Activated CD8-positive, alpha-beta memory T cell treated with anti-CD3 and anti-CD28 coated beads, Interleukin-2, amount 10 ng/mL, durations not matched to agents 7 days and 5 days (primary cell): ENCODE measurements at regions of chr12 and their contacts with region 1.

Region 1: DNA sequence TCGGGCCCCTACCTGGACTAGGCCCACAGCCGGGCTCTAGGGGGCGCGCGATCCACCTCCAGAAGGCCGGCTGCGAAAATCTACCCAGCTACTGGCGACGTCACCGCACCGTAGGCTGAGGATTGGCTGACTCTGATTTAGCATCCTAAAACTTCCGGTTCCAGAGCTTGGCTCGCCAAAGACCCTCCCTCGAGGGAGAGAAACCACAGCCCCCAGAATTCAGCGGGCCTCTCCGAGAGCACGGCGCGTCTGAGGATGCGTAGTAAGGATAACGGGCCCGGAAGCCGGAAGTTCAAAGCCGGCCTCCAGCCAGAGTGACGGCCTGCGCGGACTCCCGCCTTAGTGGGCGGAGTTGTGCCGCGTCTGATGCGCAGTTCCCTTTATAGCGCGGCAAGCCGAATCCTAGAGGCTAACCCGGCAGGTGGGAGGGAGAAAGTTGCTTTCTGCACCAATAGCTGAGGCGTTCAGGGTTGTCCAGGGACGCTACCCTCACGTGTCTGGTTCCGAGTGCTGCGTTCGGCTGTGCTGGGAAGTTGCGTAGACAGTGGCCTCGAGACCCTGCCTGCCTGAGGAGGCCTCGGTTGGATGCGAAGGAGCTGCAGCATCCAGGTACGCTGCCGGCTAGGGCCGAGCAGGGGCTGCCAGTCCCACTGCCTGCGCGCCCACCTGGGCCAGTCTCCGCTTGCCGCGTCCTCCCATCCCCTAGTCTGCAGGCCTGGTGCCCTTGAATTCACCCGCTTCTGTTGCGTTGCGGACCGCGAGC is at the start of gene COX14:
- DNase-seq: peak; percentile 100
- ATAC-seq: peak; percentile 90
- H3K4me3 Mint-ChIP-seq: peak within 1 kb of the TSS; percentile 100
- H3K27ac Mint-ChIP-seq: peak within 1 kb of the TSS; percentile 99
- H3K4me1 Mint-ChIP-seq: peaks cover 36% of the 10 kb centered on the region
- H3K27me3 Mint-ChIP-seq: no peaks in the 10 kb centered on the region
- total RNA-seq, gene COX14: 55.1 to 64.5 TPM

Region 2: GRCh38 chr12:49967042-49967776 is 144.7 kb before region 1 on chr12:
- CTCF ChIA-PET with region 1: interaction called, 21 read pairs
- DNase-seq: peak; percentile 93
- ATAC-seq: peak; percentile 90
- H3K4me3 Mint-ChIP-seq: peak overlapping the region; percentile 47
- H3K27ac Mint-ChIP-seq: no peak overlapping the region
- H3K4me1 Mint-ChIP-seq: peaks cover 7% of the 10 kb centered on the region
- H3K27me3 Mint-ChIP-seq: peaks cover 41% of the 10 kb centered on the region

Region 3: GRCh38 chr12:50074936-50075807 is 36.7 kb before region 1 on chr12:
- CTCF ChIA-PET with region 1: interaction called, 22 read pairs
- DNase-seq: peak; percentile 86
- ATAC-seq: peak; percentile 95
- H3K4me3 Mint-ChIP-seq: no peak overlapping the region
- H3K27ac Mint-ChIP-seq: peak overlapping the region; percentile 42
- H3K4me1 Mint-ChIP-seq: peaks cover 10% of the 10 kb centered on the region
- H3K27me3 Mint-ChIP-seq: no peaks in the 10 kb centered on the region

Region 4: GRCh38 chr12:50127546-50127945 is 15.7 kb after region 1 on chr12:
- CTCF ChIA-PET with region 1: interaction called, 26 read pairs
- DNase-seq: no peak
- ATAC-seq: no peak
- H3K4me3 Mint-ChIP-seq: no peak overlapping the region
- H3K27ac Mint-ChIP-seq: no peak overlapping the region
- H3K4me1 Mint-ChIP-seq: peaks cover 25% of the 10 kb centered on the region
- H3K27me3 Mint-ChIP-seq: no peaks in the 10 kb centered on the region

Region 5: GRCh38 chr12:50167041-50167828 is 55.4 kb after region 1 on chr12 and contains the start of gene CERS5:
- CTCF ChIA-PET with region 1: interaction called, 52 read pairs
- DNase-seq: peak; percentile 99
- ATAC-seq: peak; percentile 99
- H3K4me3 Mint-ChIP-seq: peak within 1 kb of the TSS; percentile 87
- H3K27ac Mint-ChIP-seq: peak within 1 kb of the TSS; percentile 97
- H3K4me1 Mint-ChIP-seq: peaks cover 27% of the 10 kb centered on the region
- H3K27me3 Mint-ChIP-seq: no peaks in the 10 kb centered on the region
- total RNA-seq, gene CERS5: 55.0 to 56.3 TPM

Region 6: DNA sequence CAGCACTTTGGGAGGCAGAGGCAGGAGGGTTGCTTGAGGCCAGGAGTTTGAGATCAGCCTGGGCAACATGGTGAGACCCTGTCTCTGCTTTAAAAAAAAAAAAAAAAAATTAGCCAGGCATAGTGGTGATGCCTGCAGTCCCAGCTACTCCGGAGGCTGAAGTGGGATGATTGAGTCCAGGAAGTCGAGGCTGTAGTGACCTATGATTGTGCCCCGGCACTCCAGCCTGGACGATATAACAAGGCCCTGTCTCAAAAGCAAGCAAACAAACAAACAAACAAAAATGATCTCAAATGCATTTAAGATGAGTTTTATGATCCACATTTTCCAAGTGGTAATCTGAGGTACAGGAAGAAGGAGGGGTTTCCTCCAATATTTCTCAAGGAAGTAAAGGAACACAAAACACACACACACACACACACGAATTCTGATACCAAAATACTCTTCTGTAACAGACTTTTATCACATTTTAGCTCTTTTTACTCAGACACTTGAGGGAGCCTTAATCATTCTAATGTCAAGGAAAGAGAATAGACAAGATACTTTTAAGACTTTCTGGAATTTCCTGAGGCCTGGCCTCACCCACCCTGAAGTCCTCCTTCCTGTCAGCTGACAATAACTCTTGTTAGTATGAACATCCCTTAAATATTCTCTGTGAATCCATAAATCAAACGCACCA is 99.7 kb after region 1 on chr12:
- CTCF ChIA-PET with region 1: interaction called, 14 read pairs
- DNase-seq: no peak
- ATAC-seq: no peak
- H3K4me3 Mint-ChIP-seq: no peak overlapping the region
- H3K27ac Mint-ChIP-seq: peak overlapping the region; percentile 85
- H3K4me1 Mint-ChIP-seq: peaks cover 47% of the 10 kb centered on the region
- H3K27me3 Mint-ChIP-seq: no peaks in the 10 kb centered on the region